Activated CD8-positive, alpha-beta T cell treated with anti-CD3 and anti-CD28 coated beads, Interleukin-2, amount 10 ng/mL, durations not matched to agents 7 days and 5 days (primary cell): ENCODE measurements at regions of chr20 and their contacts with region 1.

Region 1: GRCh38 chr20:43691928-43692524 is 25.1 kb downstream of the MYBL2 start:
- DNase-seq: peak; percentile 73
- ATAC-seq: peak; percentile 78
- H3K4me3 Mint-ChIP-seq: no peak overlapping the region
- H3K27ac Mint-ChIP-seq: peak overlapping the region; percentile 43
- H3K4me1 Mint-ChIP-seq: no peaks in the 10 kb centered on the region
- H3K27me3 Mint-ChIP-seq: no peaks in the 10 kb centered on the region

Region 2: DNA sequence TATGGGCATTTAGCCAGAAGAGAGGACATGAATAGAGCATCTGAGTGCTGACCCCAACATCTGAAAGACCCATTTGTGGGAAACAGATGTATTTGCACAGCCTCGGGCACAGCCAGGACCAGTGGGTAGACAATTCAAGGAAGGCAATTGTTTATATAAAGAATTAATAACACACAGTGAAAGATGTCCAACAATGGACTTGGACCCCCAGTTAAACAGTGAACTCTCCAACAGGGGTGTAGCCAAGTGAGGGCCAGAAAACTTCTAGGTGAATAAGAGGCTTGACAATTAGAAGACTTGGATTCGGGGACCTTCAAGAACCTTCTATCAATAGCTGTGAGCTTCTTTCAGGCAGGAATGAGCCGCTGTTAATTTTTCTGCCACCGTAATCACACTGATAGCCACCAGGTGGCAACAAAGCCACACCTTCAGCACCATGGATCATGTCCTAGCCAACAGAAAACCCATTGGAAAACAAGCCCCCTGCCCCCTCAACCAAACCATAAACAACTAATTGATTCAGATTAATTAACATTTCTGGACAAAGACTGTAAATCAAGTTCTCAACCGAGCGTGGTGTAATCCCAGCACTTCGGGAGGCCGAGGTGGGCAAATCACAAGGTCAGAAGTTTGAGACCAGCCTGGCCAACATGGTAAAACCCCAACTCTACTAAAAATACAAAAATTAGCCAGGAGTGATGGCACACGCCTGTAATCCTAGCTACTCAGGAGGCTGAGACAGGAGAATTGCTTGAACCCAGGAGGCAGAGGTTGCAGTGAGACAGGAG is 243.1 kb before region 1 on chr20:
- CTCF ChIA-PET with region 1: interaction called, 19 read pairs
- POLR2A ChIA-PET with region 1: no interaction called
- DNase-seq: peak; percentile 60
- ATAC-seq: peak; percentile 70
- H3K4me3 Mint-ChIP-seq: no peak overlapping the region
- H3K27ac Mint-ChIP-seq: no peak overlapping the region
- H3K4me1 Mint-ChIP-seq: peaks cover 5% of the 10 kb centered on the region
- H3K27me3 Mint-ChIP-seq: peaks cover 24% of the 10 kb centered on the region

Region 3: GRCh38 chr20:43537921-43538877 is 153.8 kb before region 1 on chr20:
- CTCF ChIA-PET with region 1: interaction called, 39 read pairs
- POLR2A ChIA-PET with region 1: no interaction called
- DNase-seq: peak; percentile 59
- ATAC-seq: peak; percentile 46
- H3K4me3 Mint-ChIP-seq: no peak overlapping the region
- H3K27ac Mint-ChIP-seq: peak overlapping the region; percentile 25
- H3K4me1 Mint-ChIP-seq: no peaks in the 10 kb centered on the region
- H3K27me3 Mint-ChIP-seq: no peaks in the 10 kb centered on the region

Region 4: GRCh38 chr20:43681468-43681942 is 10.5 kb before region 1 on chr20:
- CTCF ChIA-PET with region 1: interaction called, 10 read pairs
- POLR2A ChIA-PET with region 1: no interaction called
- DNase-seq: no peak
- ATAC-seq: no peak
- H3K4me3 Mint-ChIP-seq: no peak overlapping the region
- H3K27ac Mint-ChIP-seq: no peak overlapping the region
- H3K4me1 Mint-ChIP-seq: no peaks in the 10 kb centered on the region
- H3K27me3 Mint-ChIP-seq: no peaks in the 10 kb centered on the region

Region 5: GRCh38 chr20:43728044-43728529 is 36.1 kb after region 1 on chr20:
- CTCF ChIA-PET with region 1: interaction called, 11 read pairs
- POLR2A ChIA-PET with region 1: no interaction called
- DNase-seq: peak; percentile 36
- ATAC-seq: no peak
- H3K4me3 Mint-ChIP-seq: no peak overlapping the region
- H3K27ac Mint-ChIP-seq: no peak overlapping the region
- H3K4me1 Mint-ChIP-seq: peaks cover 26% of the 10 kb centered on the region
- H3K27me3 Mint-ChIP-seq: no peaks in the 10 kb centered on the region

Region 6: GRCh38 chr20:44028868-44029847 is 337.1 kb after region 1 on chr20:
- CTCF ChIA-PET with region 1: no interaction called
- POLR2A ChIA-PET with region 1: no interaction called
- DNase-seq: peak; percentile 60
- ATAC-seq: peak; percentile 73
- H3K4me3 Mint-ChIP-seq: peak overlapping the region; percentile 67
- H3K27ac Mint-ChIP-seq: peak overlapping the region; percentile 77
- H3K4me1 Mint-ChIP-seq: peaks cover 47% of the 10 kb centered on the region
- H3K27me3 Mint-ChIP-seq: peaks cover 54% of the 10 kb centered on the region